CD4-positive, alpha-beta T cell (primary cell): ENCODE measurements at regions of chr1 and their contacts with region 1.

Region 1: GRCh38 chr1:31033596-31033995 is 31.9 kb downstream of the PUM1 start:
- DNase-seq: no peak
- ATAC-seq: no peak
- H3K4me3 ChIP-seq: no peak overlapping the region
- H3K4me3 Mint-ChIP-seq: no peak overlapping the region
- H3K27ac ChIP-seq: no peak overlapping the region
- H3K27ac Mint-ChIP-seq: no peak overlapping the region
- H3K4me1 ChIP-seq: peaks cover 44% of the 10 kb centered on the region
- H3K4me1 Mint-ChIP-seq: peaks cover 85% of the 10 kb centered on the region
- H3K27me3 ChIP-seq: no peaks in the 10 kb centered on the region
- H3K27me3 Mint-ChIP-seq: no peaks in the 10 kb centered on the region
- CTCF ChIP-seq: no peak

Region 2: DNA sequence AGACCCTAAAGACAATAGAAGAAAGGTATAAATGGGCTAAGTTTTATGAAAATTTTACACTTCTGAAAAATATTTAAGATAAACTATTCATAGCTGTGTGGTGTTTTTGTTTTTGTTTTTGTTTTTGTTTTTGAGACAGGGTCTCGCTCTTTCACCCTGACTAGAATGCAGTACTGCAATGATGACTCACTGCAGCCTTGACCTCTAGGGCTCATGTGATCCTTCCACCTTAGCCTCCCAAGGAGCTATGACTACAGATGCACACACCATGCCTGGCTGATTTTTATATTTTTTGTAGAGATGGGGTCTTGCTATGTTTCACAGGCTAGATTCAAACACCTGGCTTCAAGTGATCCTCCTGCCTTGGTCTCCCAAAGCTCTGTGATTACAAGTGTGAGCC is 34.7 kb before region 1 on chr1:
- CTCF ChIA-PET with region 1: no interaction called
- POLR2A ChIA-PET with region 1: no interaction called
- intact Hi-C with region 1: loop called in 1 of 2 experiments (anchors 5 kb)
- DNase-seq: no peak
- ATAC-seq: no peak
- H3K4me3 ChIP-seq: no peak overlapping the region
- H3K4me3 Mint-ChIP-seq: no peak overlapping the region
- H3K27ac ChIP-seq: no peak overlapping the region
- H3K27ac Mint-ChIP-seq: peak overlapping the region; percentile 22
- H3K4me1 ChIP-seq: peaks cover 3% of the 10 kb centered on the region
- H3K4me1 Mint-ChIP-seq: peaks cover 59% of the 10 kb centered on the region
- H3K27me3 ChIP-seq: no peaks in the 10 kb centered on the region
- H3K27me3 Mint-ChIP-seq: no peaks in the 10 kb centered on the region
- CTCF ChIP-seq: no peak

Region 3: GRCh38 chr1:31095298-31095981 is 61.8 kb after region 1 on chr1:
- CTCF ChIA-PET with region 1: no interaction called
- POLR2A ChIA-PET with region 1: no interaction called
- intact Hi-C with region 1: no loop called
- DNase-seq: no peak
- ATAC-seq: no peak
- H3K4me3 ChIP-seq: no peak overlapping the region
- H3K4me3 Mint-ChIP-seq: no peak overlapping the region
- H3K27ac ChIP-seq: no peak overlapping the region
- H3K27ac Mint-ChIP-seq: no peak overlapping the region
- H3K4me1 ChIP-seq: no peaks in the 10 kb centered on the region
- H3K4me1 Mint-ChIP-seq: no peaks in the 10 kb centered on the region
- H3K27me3 ChIP-seq: no peaks in the 10 kb centered on the region
- H3K27me3 Mint-ChIP-seq: no peaks in the 10 kb centered on the region
- CTCF ChIP-seq: no peak